ENCODE measurements at regions of chr6 and their contacts with region 1.

Region 1: GRCh38 chr6:116217069-116217468 is 36.8 kb downstream of the TSPYL4 start:
- DNase-seq: no peak
- ATAC-seq: peak in 3 of 4 donors; percentile 40 to 59 (median 48)
- H3K4me3 ChIP-seq: no peak overlapping the region
- H3K27ac ChIP-seq: no peak overlapping the region
- H3K4me1 ChIP-seq: peaks cover 0 to 11% (median 3%) of the 10 kb centered on the region in 12 donors
- H3K27me3 ChIP-seq: no peaks in the 10 kb centered on the region
- CTCF ChIP-seq: peak; percentile 42 to 67 (median 54)
- POLR2A ChIP-seq: no peak

Region 2: DNA sequence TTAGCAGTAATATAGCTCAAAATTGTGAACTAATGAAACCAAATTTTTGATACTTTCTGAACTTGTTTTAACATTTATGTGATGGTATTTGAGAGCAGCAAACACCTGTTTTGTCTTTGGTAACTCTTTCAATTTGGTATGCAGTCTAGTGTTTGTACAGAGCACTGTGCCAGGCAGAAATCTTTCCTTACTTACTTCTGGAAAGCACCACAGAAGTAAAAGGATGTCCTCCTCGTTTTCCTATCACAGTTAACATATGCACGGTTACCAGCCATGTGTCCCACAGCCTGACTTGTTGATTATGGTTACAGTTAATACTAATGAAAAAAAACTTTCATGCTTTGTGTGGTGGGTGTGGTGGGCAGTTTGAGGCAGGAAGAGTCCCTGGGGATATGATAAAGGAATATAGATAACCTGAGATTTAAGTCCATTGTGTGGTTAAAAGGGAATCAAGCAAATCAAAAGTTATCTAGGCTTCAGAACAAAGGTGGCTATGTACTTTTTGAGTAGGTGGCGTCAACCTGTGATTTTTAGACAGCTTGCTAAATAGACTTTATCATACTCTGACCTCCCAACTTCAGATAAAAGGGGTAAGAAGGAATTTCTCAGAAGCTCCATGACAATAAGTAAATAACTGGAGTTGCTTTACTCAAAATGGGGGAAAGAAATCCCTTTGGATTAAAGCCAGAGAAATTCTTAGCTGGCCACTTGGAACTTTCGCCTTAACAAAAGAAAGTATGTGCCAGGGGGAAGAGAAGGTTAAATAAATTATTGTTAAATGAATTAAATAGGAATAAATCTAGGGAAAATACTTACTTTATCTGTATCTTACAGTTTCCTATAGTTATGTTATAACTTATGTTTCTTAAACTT is 71.0 kb before region 1 on chr6:
- intact Hi-C with region 1: no loop called
- DNase-seq: no peak
- ATAC-seq: no peak
- H3K4me3 ChIP-seq: no peak overlapping the region
- H3K27ac ChIP-seq: no peak overlapping the region
- H3K4me1 ChIP-seq: peaks cover 0 to 22% (median 7%) of the 10 kb centered on the region in 12 donors
- H3K27me3 ChIP-seq: no peaks in the 10 kb centered on the region
- CTCF ChIP-seq: no peak
- POLR2A ChIP-seq: no peak

Region 3: DNA sequence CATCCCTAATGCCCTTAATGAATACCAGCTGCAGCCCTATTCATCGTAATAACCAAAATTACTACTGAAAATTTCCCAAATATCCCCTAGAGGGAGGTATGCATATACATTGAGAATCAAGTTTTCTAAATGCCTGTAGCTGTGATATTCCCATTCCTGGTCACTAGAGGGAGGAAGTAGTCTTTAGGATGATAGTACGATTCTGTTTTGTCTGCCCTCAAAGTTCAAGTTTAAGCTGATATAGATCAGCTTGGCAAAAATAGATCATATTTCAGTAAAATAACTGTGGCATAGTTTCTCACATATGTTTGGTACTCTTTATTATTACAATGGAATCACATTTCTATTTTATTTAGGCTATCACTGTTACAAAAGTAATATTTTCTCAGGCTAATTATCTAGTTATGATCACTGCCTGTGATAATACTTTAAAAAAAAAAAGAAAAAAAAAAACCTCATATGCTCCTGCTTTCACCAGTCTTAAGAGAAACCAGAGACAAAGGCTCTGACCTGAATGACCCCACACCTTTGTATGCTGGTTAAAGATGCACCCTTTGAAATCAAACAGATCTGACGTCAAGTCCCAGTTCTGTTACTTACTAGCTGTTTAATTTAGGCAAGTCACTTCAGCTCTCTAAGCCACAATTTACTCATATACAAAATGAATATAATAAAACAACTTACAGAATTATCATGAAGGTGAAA is 51.7 kb after region 1 on chr6:
- intact Hi-C with region 1: loop called in 2 of 10 experiments (anchors 5 kb)
- DNase-seq: no peak
- ATAC-seq: peak in 3 of 4 donors; percentile 56 to 65 (median 64)
- H3K4me3 ChIP-seq: no peak overlapping the region
- H3K27ac ChIP-seq: no peak overlapping the region
- H3K4me1 ChIP-seq: peaks cover 0 to 19% (median 3%) of the 10 kb centered on the region in 12 donors
- H3K27me3 ChIP-seq: no peaks in the 10 kb centered on the region
- CTCF ChIP-seq: peak; percentile 52 to 83 (median 72)
- POLR2A ChIP-seq: no peak

Region 4: GRCh38 chr6:116648156-116648555 is 431.1 kb after region 1 on chr6:
- intact Hi-C with region 1: loop called in 1 of 10 experiments (anchors 5 kb)
- DNase-seq: no peak
- ATAC-seq: no peak
- H3K4me3 ChIP-seq: no peak overlapping the region
- H3K27ac ChIP-seq: no peak overlapping the region
- H3K4me1 ChIP-seq: no peaks in the 10 kb centered on the region
- H3K27me3 ChIP-seq: no peaks in the 10 kb centered on the region
- CTCF ChIP-seq: no peak
- POLR2A ChIP-seq: no peak

Measured in heart left ventricle (tissue), 16 donors.